ENCODE measurements at regions of chr18 and their contacts with region 1.

Region 1: DNA sequence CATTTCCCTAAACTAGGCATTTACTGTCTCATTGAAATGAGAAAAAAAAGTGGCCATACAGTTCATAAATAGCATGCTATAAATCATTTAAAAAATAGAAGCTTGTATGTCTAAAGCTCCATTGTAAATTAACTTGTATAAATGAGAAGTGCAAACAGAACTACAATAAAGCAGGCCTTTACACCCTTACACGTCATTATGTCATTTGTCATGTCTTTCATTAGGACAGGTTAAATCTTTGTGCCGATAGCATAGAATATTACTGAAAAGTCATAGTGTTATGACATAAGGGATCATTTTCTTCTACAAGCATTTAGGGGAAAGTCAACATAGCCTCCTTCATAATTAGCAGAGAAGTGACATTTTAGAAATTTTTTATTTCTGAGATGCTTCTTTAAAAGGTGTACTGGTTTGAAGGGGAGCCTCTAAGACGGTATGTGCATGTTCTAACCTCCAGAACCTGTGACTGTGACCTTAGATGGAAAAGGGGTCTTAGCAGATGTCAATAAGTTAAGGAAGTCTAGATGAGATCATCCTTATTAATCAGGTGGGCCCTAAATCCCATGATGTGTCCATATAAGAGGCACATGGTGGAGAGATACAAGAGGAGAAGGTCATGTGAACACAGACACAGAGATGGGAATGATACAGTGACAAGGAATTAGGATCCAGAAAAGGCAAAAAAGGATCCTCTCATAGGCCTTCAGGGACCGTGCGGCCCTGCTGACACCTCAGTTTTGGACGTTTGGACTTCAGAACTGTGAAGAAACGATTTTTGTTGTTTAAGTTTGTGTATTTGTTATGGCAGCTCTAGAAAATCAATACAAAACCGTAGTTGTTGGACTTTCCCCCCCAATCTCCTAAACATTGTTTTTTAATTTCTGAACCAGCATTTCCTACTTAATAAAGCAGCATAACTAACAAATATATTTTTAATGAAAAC is 863.7 kb downstream of the MBD2 start:
- DNase-seq: no peak
- H3K4me3 ChIP-seq: no peak overlapping the region
- CTCF ChIP-seq: no peak
- POLR2A ChIP-seq: no peak

Region 2: DNA sequence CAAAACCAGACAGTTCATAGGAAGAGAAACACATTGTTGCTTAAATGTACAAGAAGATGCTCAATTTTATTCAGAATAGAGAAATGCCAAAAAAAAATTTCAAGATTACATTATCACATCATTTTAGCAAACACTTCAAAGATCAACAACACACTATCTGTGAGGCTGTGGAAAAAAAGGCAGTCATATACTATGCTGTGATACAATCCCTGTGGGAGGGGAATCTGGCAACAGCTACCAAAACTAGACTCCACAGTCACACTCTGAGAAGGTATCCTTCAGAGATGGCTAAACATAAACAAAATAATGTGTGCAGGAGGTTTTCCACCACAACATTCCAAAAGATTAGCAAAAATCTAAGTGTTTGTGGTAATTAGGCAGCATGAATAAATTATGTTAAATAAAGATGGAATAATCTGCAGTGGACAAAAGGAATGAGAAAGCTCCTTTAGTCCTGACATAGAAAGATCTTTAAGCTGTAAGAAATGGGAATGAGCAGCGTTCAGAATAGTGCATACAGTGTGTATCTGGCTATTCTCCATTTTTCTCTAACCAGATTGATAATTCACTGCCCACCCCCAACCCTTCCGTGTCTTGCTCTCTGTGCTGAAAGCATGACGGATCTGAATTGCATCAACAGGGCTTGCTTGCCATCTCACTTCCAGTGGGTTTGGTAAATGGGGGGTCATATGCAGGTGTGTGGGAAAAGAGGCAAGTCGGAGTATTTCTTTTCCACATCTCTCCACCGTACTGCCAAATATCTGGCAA is 534.1 kb after region 1 on chr18:
- intact Hi-C with region 1: loop called (anchors 5 kb)
- DNase-seq: no peak
- H3K4me3 ChIP-seq: no peak overlapping the region
- CTCF ChIP-seq: no peak
- POLR2A ChIP-seq: no peak